ENCODE measurements at regions of chr11 and their contacts with region 1.

Region 1: GRCh38 chr11:47847892-47848635 is at the start of gene NUP160:
- DNase-seq: peak; percentile 85 to 92
- H3K4me3 ChIP-seq: peak within 1 kb of the TSS; percentile 96
- H3K4me3 Mint-ChIP-seq: peak within 1 kb of the TSS; percentile 90
- H3K27ac Mint-ChIP-seq: peak within 1 kb of the TSS; percentile 98
- H3K4me1 ChIP-seq: peaks cover 11% of the 10 kb centered on the region
- H3K4me1 Mint-ChIP-seq: peaks cover 12% of the 10 kb centered on the region
- H3K27me3 ChIP-seq: no peaks in the 10 kb centered on the region
- H3K27me3 Mint-ChIP-seq: no peaks in the 10 kb centered on the region
- CTCF ChIP-seq: no peak
- total RNA-seq, gene NUP160: 72.9 and 74.7 TPM in 2 replicates

Region 2: DNA sequence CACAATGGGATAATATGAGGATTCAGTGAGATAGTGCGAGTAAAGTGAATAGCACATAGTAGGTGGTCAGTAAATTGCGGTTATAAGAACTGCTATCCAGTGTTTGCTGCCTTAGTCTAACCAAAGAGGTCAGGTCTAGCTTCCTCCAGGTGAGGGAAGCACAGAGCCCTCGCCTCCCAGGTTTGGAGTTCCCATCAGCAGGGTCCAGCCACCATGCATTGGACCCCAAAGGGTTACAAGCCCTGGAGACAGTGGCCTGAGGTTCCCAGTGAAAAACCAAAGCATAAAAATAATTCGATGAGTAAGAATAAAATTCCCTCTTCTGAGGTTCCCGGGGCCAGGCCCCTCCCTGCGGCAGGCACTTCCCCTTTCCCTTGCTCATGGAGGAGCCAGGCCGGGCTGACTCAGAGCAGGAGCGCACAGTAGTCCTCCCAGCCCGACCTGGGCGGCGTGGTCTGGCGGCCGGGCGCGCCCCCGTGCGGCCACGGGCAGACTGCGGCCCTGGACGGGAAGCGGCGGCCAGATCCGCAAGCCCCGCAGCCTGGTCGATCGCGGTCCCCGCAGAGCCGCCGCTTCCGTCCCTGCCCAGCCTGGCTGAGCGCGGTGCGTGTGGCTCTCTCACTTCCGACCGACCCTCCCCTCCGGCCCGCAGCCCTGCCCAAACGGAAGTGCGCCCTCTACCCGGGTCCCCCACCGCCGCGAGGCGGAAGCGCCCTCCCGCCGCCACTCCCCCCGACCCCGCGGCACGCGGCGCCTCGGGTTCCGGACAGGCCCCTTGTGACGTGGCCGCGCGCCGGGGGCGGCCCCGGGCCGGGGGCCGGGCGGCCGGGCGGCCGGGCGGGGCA is 440.1 kb before region 1 on chr11 and contains the start of gene SLC39A13:
- CTCF ChIA-PET with region 1: no interaction called
- POLR2A ChIA-PET with region 1: no interaction called
- intact Hi-C with region 1: loop called (anchors 1 kb)
- DNase-seq: peak; percentile 96 to 98
- H3K4me3 ChIP-seq: peak within 1 kb of the TSS; percentile 70
- H3K4me3 Mint-ChIP-seq: peak within 1 kb of the TSS; percentile 89
- H3K27ac Mint-ChIP-seq: peak within 1 kb of the TSS; percentile 82
- H3K4me1 ChIP-seq: peaks cover 9% of the 10 kb centered on the region; the same call in 1 of the 2 replicates
- H3K4me1 Mint-ChIP-seq: peaks cover 9% of the 10 kb centered on the region
- H3K27me3 ChIP-seq: no peaks in the 10 kb centered on the region
- H3K27me3 Mint-ChIP-seq: no peaks in the 10 kb centered on the region
- CTCF ChIP-seq: peak; percentile 60 to 85
- total RNA-seq, gene SLC39A13: 27.1 and 30.8 TPM in 2 replicates

Region 3: GRCh38 chr11:47433991-47434786 is 413.9 kb before region 1 on chr11:
- CTCF ChIA-PET with region 1: no interaction called
- POLR2A ChIA-PET with region 1: no interaction called
- intact Hi-C with region 1: no loop called
- DNase-seq: no peak
- H3K4me3 ChIP-seq: no peak overlapping the region
- H3K4me3 Mint-ChIP-seq: no peak overlapping the region
- H3K27ac Mint-ChIP-seq: no peak overlapping the region
- H3K4me1 ChIP-seq: no peaks in the 10 kb centered on the region
- H3K4me1 Mint-ChIP-seq: peaks cover 7% of the 10 kb centered on the region
- H3K27me3 ChIP-seq: no peaks in the 10 kb centered on the region
- H3K27me3 Mint-ChIP-seq: no peaks in the 10 kb centered on the region
- CTCF ChIP-seq: no peak

Region 4: DNA sequence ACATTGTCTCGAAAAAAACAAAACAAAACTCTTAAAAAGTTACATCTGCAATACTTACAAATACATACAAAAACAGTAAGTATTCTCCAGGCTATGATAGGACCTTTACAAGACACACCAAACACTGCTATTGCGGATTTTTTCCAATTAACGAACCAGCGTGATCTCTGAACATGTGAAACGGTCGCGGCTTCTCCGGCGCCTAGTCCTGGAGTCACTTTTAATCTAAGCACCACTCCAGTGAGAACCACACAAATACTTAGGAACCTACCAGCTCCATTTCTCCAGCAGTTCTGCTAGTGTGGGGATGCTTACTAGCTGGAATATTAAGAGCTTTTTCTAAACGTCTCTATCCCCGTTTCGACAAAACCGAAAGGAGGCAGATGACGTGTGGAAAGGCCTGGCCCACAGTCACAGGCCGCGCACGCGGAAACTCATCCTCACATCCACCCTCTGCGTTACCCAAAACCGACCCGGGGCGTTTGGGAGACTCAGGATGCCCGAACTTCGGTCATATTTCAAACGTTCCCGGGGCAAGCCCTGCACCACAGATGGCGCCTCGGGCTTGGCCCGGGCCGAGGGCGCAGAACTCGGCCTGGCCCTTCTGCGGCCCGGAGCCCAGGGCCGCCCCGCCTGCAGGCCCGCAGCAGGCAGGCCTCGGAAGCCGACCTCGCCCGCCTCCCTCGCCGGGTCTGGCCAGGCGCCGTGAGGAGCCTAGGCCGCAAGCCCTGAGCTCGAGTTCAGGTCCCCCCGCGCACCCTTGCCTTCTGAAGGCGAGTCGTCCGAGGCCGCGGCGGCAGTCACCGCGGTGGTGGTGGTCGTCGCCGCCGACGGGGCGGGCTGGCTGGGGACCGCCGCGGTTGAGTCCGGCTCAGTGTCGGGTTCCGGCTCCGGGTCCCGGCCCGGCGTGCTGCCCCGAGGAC is 81.5 kb before region 1 on chr11:
- CTCF ChIA-PET with region 1: no interaction called
- POLR2A ChIA-PET with region 1: interaction called, 4 read pairs
- intact Hi-C with region 1: loop called (anchors 2 kb)
- DNase-seq: peak; percentile 50 to 67
- H3K4me3 ChIP-seq: peak overlapping the region; percentile 63
- H3K4me3 Mint-ChIP-seq: peak overlapping the region; percentile 80
- H3K27ac Mint-ChIP-seq: peak overlapping the region; percentile 100
- H3K4me1 ChIP-seq: peaks cover 6% of the 10 kb centered on the region; the same call in 1 of the 2 replicates
- H3K4me1 Mint-ChIP-seq: peaks cover 15% of the 10 kb centered on the region
- H3K27me3 ChIP-seq: no peaks in the 10 kb centered on the region
- H3K27me3 Mint-ChIP-seq: no peaks in the 10 kb centered on the region
- CTCF ChIP-seq: no peak

Region 5: GRCh38 chr11:47819743-47820142 is 28.3 kb before region 1 on chr11:
- CTCF ChIA-PET with region 1: no interaction called
- POLR2A ChIA-PET with region 1: no interaction called
- intact Hi-C with region 1: no loop called
- DNase-seq: no peak
- H3K4me3 ChIP-seq: no peak overlapping the region
- H3K4me3 Mint-ChIP-seq: no peak overlapping the region
- H3K27ac Mint-ChIP-seq: no peak overlapping the region
- H3K4me1 ChIP-seq: no peaks in the 10 kb centered on the region
- H3K4me1 Mint-ChIP-seq: no peaks in the 10 kb centered on the region
- H3K27me3 ChIP-seq: no peaks in the 10 kb centered on the region
- H3K27me3 Mint-ChIP-seq: no peaks in the 10 kb centered on the region
- CTCF ChIP-seq: no peak

Region 6: GRCh38 chr11:48109046-48109666 is 261.1 kb after region 1 on chr11:
- CTCF ChIA-PET with region 1: no interaction called
- POLR2A ChIA-PET with region 1: no interaction called
- intact Hi-C with region 1: loop called (anchors 5 kb)
- DNase-seq: peak in 1 of 2 experiments; percentile 27
- H3K4me3 ChIP-seq: no peak overlapping the region
- H3K4me3 Mint-ChIP-seq: no peak overlapping the region
- H3K27ac Mint-ChIP-seq: no peak overlapping the region
- H3K4me1 ChIP-seq: peaks cover 11% of the 10 kb centered on the region; the same call in 1 of the 2 replicates
- H3K4me1 Mint-ChIP-seq: peaks cover 7% of the 10 kb centered on the region
- H3K27me3 ChIP-seq: no peaks in the 10 kb centered on the region
- H3K27me3 Mint-ChIP-seq: no peaks in the 10 kb centered on the region
- CTCF ChIP-seq: peak; percentile 30 to 44